Caco-2 (cell line): ENCODE measurements at regions of chr4 and their contacts with region 1.

Region 1: DNA sequence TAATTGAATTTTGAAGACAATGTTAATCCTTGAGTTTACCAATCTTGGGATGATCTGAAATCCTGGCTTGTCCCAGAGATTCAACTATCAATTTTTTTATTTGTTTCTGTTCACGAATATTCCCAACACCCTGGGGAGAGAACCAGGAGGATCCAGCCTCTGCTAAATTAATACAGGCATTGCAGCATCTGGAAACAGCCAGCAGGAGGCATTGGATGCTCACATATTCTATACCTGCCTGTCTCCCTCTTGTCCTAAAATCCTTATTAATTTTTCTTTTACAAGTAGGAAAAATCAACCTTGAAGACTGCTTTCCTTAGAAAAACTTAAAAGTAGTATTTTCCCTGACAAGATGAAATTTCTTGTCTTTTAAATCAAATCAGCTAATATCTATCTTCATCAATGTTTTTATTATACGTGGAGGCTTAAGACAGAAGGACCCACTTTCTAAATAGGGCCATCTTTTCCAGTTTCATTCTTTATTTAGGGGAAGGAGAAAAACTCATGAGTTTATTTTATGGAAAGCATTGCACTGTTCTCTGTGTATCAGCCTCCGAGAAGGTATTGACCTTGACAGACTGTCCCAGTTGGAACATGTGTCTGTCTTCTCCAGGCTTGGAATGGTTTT is 102.4 kb downstream of the CLNK start:
- DNase-seq: peak; percentile 46 to 47
- H3K4me3 ChIP-seq: no peak overlapping the region
- H3K4me3 Mint-ChIP-seq: no peak overlapping the region
- H3K27ac Mint-ChIP-seq: no peak overlapping the region
- H3K4me1 ChIP-seq: peaks cover 20% of the 10 kb centered on the region
- H3K4me1 Mint-ChIP-seq: peaks cover 9% of the 10 kb centered on the region
- H3K27me3 ChIP-seq: no peaks in the 10 kb centered on the region
- H3K27me3 Mint-ChIP-seq: no peaks in the 10 kb centered on the region
- CTCF ChIP-seq: peak; percentile 69 to 72

Region 2: GRCh38 chr4:10565166-10565780 is 16.9 kb before region 1 on chr4:
- CTCF ChIA-PET with region 1: no interaction called
- POLR2A ChIA-PET with region 1: no interaction called
- intact Hi-C with region 1: no loop called
- DNase-seq: no peak
- H3K4me3 ChIP-seq: no peak overlapping the region
- H3K4me3 Mint-ChIP-seq: no peak overlapping the region
- H3K27ac Mint-ChIP-seq: no peak overlapping the region
- H3K4me1 ChIP-seq: no peaks in the 10 kb centered on the region
- H3K4me1 Mint-ChIP-seq: no peaks in the 10 kb centered on the region
- H3K27me3 ChIP-seq: no peaks in the 10 kb centered on the region
- H3K27me3 Mint-ChIP-seq: no peaks in the 10 kb centered on the region
- CTCF ChIP-seq: no peak

Region 3: GRCh38 chr4:10715696-10716095 is 133.5 kb after region 1 on chr4:
- CTCF ChIA-PET with region 1: no interaction called
- POLR2A ChIA-PET with region 1: no interaction called
- intact Hi-C with region 1: loop called (anchors 1 kb)
- DNase-seq: no peak
- H3K4me3 ChIP-seq: no peak overlapping the region
- H3K4me3 Mint-ChIP-seq: no peak overlapping the region
- H3K27ac Mint-ChIP-seq: no peak overlapping the region
- H3K4me1 ChIP-seq: no peaks in the 10 kb centered on the region
- H3K4me1 Mint-ChIP-seq: no peaks in the 10 kb centered on the region
- H3K27me3 ChIP-seq: no peaks in the 10 kb centered on the region
- H3K27me3 Mint-ChIP-seq: no peaks in the 10 kb centered on the region
- CTCF ChIP-seq: no peak

Region 4: GRCh38 chr4:11424000-11424399 is 841.8 kb after region 1 on chr4:
- CTCF ChIA-PET with region 1: no interaction called
- POLR2A ChIA-PET with region 1: no interaction called
- intact Hi-C with region 1: loop called (anchors 1 kb)
- DNase-seq: peak in 1 of 2 experiments; percentile 29
- H3K4me3 ChIP-seq: no peak overlapping the region
- H3K4me3 Mint-ChIP-seq: no peak overlapping the region
- H3K27ac Mint-ChIP-seq: no peak overlapping the region
- H3K4me1 ChIP-seq: no peaks in the 10 kb centered on the region
- H3K4me1 Mint-ChIP-seq: peaks cover 19% of the 10 kb centered on the region
- H3K27me3 ChIP-seq: no peaks in the 10 kb centered on the region
- H3K27me3 Mint-ChIP-seq: no peaks in the 10 kb centered on the region
- CTCF ChIP-seq: peak; percentile 13 to 29

Region 5: DNA sequence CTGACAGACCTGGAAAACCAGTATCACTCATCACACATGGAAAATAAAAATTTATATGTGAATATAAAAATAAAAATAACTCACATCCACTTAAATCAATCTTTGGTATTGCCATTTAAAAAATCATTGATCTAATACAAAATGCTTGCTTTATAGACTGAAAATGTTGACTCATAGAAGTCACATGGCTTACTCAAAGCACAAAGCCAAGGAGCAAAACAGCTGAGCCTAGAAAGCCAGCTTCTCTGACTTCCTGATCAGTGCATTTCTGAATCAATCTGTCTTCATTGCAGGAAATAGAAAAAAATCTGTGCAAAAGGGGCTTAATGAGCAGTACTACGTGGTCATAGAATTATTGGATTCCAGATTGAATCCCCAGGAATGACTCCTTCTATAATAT is 1023.4 kb after region 1 on chr4:
- CTCF ChIA-PET with region 1: no interaction called
- POLR2A ChIA-PET with region 1: no interaction called
- intact Hi-C with region 1: no loop called
- DNase-seq: no peak
- H3K4me3 ChIP-seq: no peak overlapping the region
- H3K4me3 Mint-ChIP-seq: no peak overlapping the region
- H3K27ac Mint-ChIP-seq: no peak overlapping the region
- H3K4me1 ChIP-seq: no peaks in the 10 kb centered on the region
- H3K4me1 Mint-ChIP-seq: no peaks in the 10 kb centered on the region
- H3K27me3 ChIP-seq: no peaks in the 10 kb centered on the region
- H3K27me3 Mint-ChIP-seq: no peaks in the 10 kb centered on the region
- CTCF ChIP-seq: no peak

Region 6: GRCh38 chr4:11720292-11720691 is 1138.1 kb after region 1 on chr4:
- CTCF ChIA-PET with region 1: no interaction called
- POLR2A ChIA-PET with region 1: no interaction called
- intact Hi-C with region 1: loop called (anchors 1 kb)
- DNase-seq: peak in 1 of 2 experiments; percentile 13
- H3K4me3 ChIP-seq: no peak overlapping the region
- H3K4me3 Mint-ChIP-seq: no peak overlapping the region
- H3K27ac Mint-ChIP-seq: no peak overlapping the region
- H3K4me1 ChIP-seq: no peaks in the 10 kb centered on the region
- H3K4me1 Mint-ChIP-seq: no peaks in the 10 kb centered on the region
- H3K27me3 ChIP-seq: no peaks in the 10 kb centered on the region
- H3K27me3 Mint-ChIP-seq: no peaks in the 10 kb centered on the region
- CTCF ChIP-seq: peak; percentile 61 to 75

Region 7: DNA sequence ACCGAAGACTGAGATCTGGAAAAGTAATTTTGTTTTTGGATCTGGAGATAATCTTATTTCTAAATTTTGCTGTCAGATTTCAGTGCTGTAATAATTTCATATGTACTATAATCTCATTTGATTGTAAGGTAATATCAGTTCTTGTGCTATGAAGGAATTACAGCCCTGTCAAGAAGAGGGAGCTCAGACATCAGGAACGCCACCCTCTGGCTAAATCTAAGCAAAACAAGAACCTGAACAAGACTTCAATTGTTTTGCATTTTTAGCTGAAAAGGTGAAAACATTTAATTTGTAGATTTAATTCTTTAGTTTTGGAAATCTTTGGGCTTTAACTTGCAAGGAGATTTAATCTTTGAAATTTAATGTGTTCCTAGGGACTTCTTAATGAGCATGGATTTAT is 1371.9 kb after region 1 on chr4:
- CTCF ChIA-PET with region 1: no interaction called
- POLR2A ChIA-PET with region 1: no interaction called
- intact Hi-C with region 1: loop called (anchors 10 kb)
- DNase-seq: no peak
- H3K4me3 ChIP-seq: no peak overlapping the region
- H3K4me3 Mint-ChIP-seq: no peak overlapping the region
- H3K27ac Mint-ChIP-seq: no peak overlapping the region
- H3K4me1 ChIP-seq: no peaks in the 10 kb centered on the region
- H3K4me1 Mint-ChIP-seq: no peaks in the 10 kb centered on the region
- H3K27me3 ChIP-seq: no peaks in the 10 kb centered on the region
- H3K27me3 Mint-ChIP-seq: no peaks in the 10 kb centered on the region
- CTCF ChIP-seq: no peak